ENCODE measurements at regions of chr1 and their contacts with region 1.

Region 1: DNA sequence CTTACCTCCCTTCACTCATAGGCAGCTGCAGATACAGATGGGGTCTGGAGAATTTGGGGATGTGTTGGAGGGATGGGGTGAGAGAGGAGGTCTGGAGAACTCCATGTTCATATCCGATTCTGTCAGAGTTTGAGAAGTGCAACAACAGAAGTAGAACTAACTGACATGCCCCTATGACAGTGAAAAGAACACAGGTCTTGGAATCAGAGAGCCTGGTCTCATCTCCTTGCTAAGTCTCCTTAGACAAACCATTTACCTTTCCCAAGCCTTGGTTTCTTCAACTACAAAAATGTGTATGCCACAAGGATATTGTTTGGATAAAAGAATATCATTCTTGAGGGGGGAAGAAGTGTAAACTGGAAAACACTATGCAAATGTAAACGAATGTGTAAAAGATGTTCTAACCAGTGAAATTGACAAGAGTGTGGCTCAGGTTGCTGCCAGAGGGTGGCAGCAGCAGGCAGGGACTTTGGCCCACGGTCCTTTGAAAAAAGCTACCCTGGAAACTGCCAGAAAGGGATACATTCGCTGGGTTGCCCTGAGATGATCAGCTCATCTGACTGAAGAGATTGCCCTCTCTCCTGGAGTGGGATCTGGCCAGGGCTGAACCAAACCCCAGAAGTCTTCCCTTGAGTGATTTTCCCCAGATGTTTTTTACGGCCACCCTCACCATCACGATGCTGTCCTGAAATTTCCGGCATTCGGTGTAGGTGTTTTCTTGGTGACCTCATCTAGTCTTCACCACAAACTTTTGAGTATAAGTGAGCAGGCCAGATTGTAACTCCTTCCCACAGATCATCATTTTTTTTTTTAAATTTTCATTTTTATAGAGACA is 17.0 kb upstream of the CD2 start:
- DNase-seq: peak; percentile 82 to 85 (median 83)
- H3K4me3 ChIP-seq: peak overlapping the region in 1 of 2 donors; percentile 44
- H3K4me3 Mint-ChIP-seq: peak overlapping the region; percentile 50 to 80 (median 74)
- H3K27ac ChIP-seq: peak overlapping the region; percentile 97
- H3K27ac Mint-ChIP-seq: peak overlapping the region; percentile 97 to 100 (median 99)
- H3K4me1 ChIP-seq: peaks cover 49% of the 10 kb centered on the region
- H3K4me1 Mint-ChIP-seq: peaks cover 41 to 55% (median 46%) of the 10 kb centered on the region in 4 donors
- H3K27me3 ChIP-seq: no peaks in the 10 kb centered on the region
- H3K27me3 Mint-ChIP-seq: no peaks in the 10 kb centered on the region

Region 2: DNA sequence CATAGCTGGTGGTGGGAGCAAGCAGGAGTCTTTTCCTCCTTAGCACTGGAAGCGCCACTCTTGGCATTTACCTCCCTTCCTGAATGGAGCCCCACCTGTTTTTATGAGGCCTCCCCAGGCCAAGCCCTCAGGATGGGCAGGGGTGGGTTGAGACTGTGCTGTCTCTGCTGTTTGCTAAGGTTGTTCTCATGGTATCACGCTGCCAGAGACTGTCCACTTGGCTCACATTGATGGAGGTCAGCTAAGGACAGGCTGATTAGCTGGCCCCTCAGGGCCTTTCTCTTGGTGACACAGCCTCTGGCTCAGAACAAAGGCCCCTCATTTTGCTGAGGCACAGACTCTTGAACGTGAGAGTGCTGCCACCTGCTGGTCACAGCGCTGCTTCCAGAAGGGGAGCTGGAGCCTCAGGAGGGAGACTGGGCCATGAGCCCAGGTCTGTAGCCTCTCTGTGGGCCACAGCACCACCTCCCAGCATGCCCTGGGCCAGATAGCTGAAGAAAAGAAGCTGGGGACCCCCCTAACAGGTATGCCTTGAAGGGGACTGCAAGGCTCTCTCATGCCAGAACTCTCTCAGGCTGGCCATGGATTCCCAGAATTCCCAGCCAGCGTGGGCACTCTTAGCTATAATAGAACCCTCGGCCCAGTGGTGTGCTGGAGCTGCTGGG is 252.0 kb before region 1 on chr1:
- CTCF ChIA-PET with region 1: no interaction called
- POLR2A ChIA-PET with region 1: no interaction called
- intact Hi-C with region 1: no loop called
- DNase-seq: peak; percentile 74 to 81 (median 76)
- H3K4me3 ChIP-seq: no peak overlapping the region
- H3K4me3 Mint-ChIP-seq: no peak overlapping the region
- H3K27ac ChIP-seq: no peak overlapping the region
- H3K27ac Mint-ChIP-seq: no peak overlapping the region
- H3K4me1 ChIP-seq: no peaks in the 10 kb centered on the region
- H3K4me1 Mint-ChIP-seq: peaks cover 0 to 2% (median 0%) of the 10 kb centered on the region in 4 donors
- H3K27me3 ChIP-seq: no peaks in the 10 kb centered on the region
- H3K27me3 Mint-ChIP-seq: no peaks in the 10 kb centered on the region

Region 3: GRCh38 chr1:116748272-116748671 is 11.0 kb after region 1 on chr1:
- CTCF ChIA-PET with region 1: interaction called, 114 read pairs
- POLR2A ChIA-PET with region 1: interaction called, 1,832 read pairs
- intact Hi-C with region 1: no loop called
- DNase-seq: no peak
- H3K4me3 ChIP-seq: no peak overlapping the region
- H3K4me3 Mint-ChIP-seq: no peak overlapping the region
- H3K27ac ChIP-seq: no peak overlapping the region
- H3K27ac Mint-ChIP-seq: peak overlapping the region in 3 of 7 donors; percentile 16 to 71 (median 23)
- H3K4me1 ChIP-seq: peaks cover 24% of the 10 kb centered on the region
- H3K4me1 Mint-ChIP-seq: peaks cover 16 to 32% (median 21%) of the 10 kb centered on the region in 4 donors
- H3K27me3 ChIP-seq: no peaks in the 10 kb centered on the region
- H3K27me3 Mint-ChIP-seq: no peaks in the 10 kb centered on the region

Region 4: GRCh38 chr1:116769561-116769977 is 32.3 kb after region 1 on chr1:
- CTCF ChIA-PET with region 1: interaction called, 170 read pairs
- POLR2A ChIA-PET with region 1: interaction called, 1,832 read pairs
- intact Hi-C with region 1: loop called (anchors 1 kb)
- DNase-seq: peak; percentile 85 to 94 (median 89)
- H3K4me3 ChIP-seq: peak overlapping the region in 1 of 2 donors; percentile 24
- H3K4me3 Mint-ChIP-seq: peak overlapping the region; percentile 29 to 94 (median 74)
- H3K27ac ChIP-seq: peak overlapping the region; percentile 88
- H3K27ac Mint-ChIP-seq: peak overlapping the region; percentile 97 to 99 (median 98)
- H3K4me1 ChIP-seq: peaks cover 87% of the 10 kb centered on the region
- H3K4me1 Mint-ChIP-seq: peaks cover 75 to 91% (median 82%) of the 10 kb centered on the region in 4 donors
- H3K27me3 ChIP-seq: no peaks in the 10 kb centered on the region
- H3K27me3 Mint-ChIP-seq: no peaks in the 10 kb centered on the region

Region 5: GRCh38 chr1:116817582-116818064 is 80.4 kb after region 1 on chr1:
- CTCF ChIA-PET with region 1: interaction called, 261 read pairs
- POLR2A ChIA-PET with region 1: interaction called, 165 read pairs
- intact Hi-C with region 1: loop called (anchors 1 kb)
- DNase-seq: peak; percentile 67 to 77 (median 71)
- H3K4me3 ChIP-seq: no peak overlapping the region
- H3K4me3 Mint-ChIP-seq: peak overlapping the region in 7 of 8 donors; percentile 39 to 76 (median 60)
- H3K27ac ChIP-seq: no peak overlapping the region
- H3K27ac Mint-ChIP-seq: peak overlapping the region; percentile 79 to 96 (median 88)
- H3K4me1 ChIP-seq: peaks cover 36% of the 10 kb centered on the region
- H3K4me1 Mint-ChIP-seq: peaks cover 22 to 40% (median 29%) of the 10 kb centered on the region in 4 donors
- H3K27me3 ChIP-seq: no peaks in the 10 kb centered on the region
- H3K27me3 Mint-ChIP-seq: no peaks in the 10 kb centered on the region

Region 6: GRCh38 chr1:116934586-116935207 is 197.5 kb after region 1 on chr1:
- CTCF ChIA-PET with region 1: interaction called, 18 read pairs
- POLR2A ChIA-PET with region 1: interaction called, 4 read pairs
- intact Hi-C with region 1: loop called (anchors 1 kb)
- DNase-seq: peak in 4 of 5 donors; percentile 26 to 37 (median 34)
- H3K4me3 ChIP-seq: no peak overlapping the region
- H3K4me3 Mint-ChIP-seq: peak overlapping the region in 1 of 8 donors; percentile 39
- H3K27ac ChIP-seq: no peak overlapping the region
- H3K27ac Mint-ChIP-seq: peak overlapping the region in 6 of 7 donors; percentile 45 to 96 (median 88)
- H3K4me1 ChIP-seq: peaks cover 27% of the 10 kb centered on the region
- H3K4me1 Mint-ChIP-seq: peaks cover 18 to 26% (median 22%) of the 10 kb centered on the region in 4 donors
- H3K27me3 ChIP-seq: no peaks in the 10 kb centered on the region
- H3K27me3 Mint-ChIP-seq: no peaks in the 10 kb centered on the region

Region 7: GRCh38 chr1:117398957-117399356 is 661.7 kb after region 1 on chr1:
- CTCF ChIA-PET with region 1: no interaction called
- POLR2A ChIA-PET with region 1: no interaction called
- intact Hi-C with region 1: no loop called
- DNase-seq: no peak
- H3K4me3 ChIP-seq: no peak overlapping the region
- H3K4me3 Mint-ChIP-seq: peak overlapping the region in 2 of 8 donors; percentile 0 to 23
- H3K27ac ChIP-seq: no peak overlapping the region
- H3K27ac Mint-ChIP-seq: no peak overlapping the region
- H3K4me1 ChIP-seq: peaks cover 26% of the 10 kb centered on the region
- H3K4me1 Mint-ChIP-seq: peaks cover 41 to 73% (median 59%) of the 10 kb centered on the region in 4 donors
- H3K27me3 ChIP-seq: no peaks in the 10 kb centered on the region
- H3K27me3 Mint-ChIP-seq: no peaks in the 10 kb centered on the region